ENCODE measurements at regions of chr2 and their contacts with region 1.

Region 1: DNA sequence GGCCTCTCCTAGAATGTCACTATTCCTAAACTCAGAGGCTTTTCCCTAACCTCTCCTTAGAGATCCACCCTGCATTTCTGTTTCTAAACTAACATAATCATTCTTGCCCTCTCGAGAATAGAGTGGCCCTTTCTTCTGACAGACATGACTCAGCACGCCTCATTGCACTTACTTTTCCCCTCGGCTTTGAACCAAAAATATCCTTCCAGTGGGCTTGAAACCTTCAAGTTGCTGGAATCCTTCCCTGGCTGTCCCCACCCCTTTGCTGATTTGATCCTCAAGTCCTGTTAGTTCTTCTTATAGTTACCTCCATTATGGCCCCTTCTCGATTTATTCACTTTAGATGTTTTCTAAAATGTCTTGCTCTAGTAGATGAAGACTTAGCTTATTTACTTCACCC is 158.0 kb downstream of the LTBP1 start:
- DNase-seq: no peak
- H3K4me3 ChIP-seq: no peak overlapping the region
- H3K27ac ChIP-seq: no peak overlapping the region
- H3K4me1 ChIP-seq: no peaks in the 10 kb centered on the region
- H3K27me3 ChIP-seq: no peaks in the 10 kb centered on the region
- CTCF ChIP-seq: no peak
- POLR2A ChIP-seq: no peak

Region 2: DNA sequence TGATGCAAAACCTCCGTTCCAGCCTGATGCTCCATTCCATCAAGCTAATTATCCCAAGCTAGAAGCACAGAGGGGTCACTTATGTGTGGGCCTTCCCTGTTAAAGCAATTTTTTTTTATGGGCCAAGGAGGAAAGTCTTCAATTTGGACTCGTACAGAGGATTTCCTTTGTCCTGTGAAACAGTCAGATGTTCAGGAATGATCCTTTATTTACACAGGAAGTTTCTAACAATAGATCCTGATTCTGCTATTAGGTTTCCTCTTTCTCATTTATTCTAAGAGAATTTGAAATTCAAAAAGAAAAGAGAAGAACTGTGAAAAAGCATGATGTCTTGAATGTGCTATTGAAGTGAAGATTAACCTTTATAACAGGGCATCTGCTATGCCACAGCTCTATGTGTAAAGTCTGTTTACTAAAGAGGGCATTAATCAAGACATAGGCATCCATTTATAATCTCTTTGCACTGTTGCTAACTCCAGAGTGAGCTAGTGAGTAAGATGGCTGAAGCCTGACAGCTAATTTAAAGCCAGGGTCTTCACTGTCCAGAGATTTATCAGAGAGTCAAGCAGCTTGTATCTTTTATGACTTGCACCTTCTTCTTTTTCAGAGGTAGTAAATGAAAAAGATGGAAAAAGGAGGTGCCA is 599.7 kb after region 1 on chr2:
- intact Hi-C with region 1: loop called (anchors 5 kb)
- DNase-seq: no peak
- H3K4me3 ChIP-seq: no peak overlapping the region
- H3K27ac ChIP-seq: no peak overlapping the region
- H3K4me1 ChIP-seq: no peaks in the 10 kb centered on the region
- H3K27me3 ChIP-seq: no peaks in the 10 kb centered on the region
- CTCF ChIP-seq: no peak
- POLR2A ChIP-seq: no peak

Measured in breast epithelium (tissue), 4 donors.